HAP-1 (cell line): ENCODE measurements at regions of chr6 and their contacts with region 1.

Region 1: DNA sequence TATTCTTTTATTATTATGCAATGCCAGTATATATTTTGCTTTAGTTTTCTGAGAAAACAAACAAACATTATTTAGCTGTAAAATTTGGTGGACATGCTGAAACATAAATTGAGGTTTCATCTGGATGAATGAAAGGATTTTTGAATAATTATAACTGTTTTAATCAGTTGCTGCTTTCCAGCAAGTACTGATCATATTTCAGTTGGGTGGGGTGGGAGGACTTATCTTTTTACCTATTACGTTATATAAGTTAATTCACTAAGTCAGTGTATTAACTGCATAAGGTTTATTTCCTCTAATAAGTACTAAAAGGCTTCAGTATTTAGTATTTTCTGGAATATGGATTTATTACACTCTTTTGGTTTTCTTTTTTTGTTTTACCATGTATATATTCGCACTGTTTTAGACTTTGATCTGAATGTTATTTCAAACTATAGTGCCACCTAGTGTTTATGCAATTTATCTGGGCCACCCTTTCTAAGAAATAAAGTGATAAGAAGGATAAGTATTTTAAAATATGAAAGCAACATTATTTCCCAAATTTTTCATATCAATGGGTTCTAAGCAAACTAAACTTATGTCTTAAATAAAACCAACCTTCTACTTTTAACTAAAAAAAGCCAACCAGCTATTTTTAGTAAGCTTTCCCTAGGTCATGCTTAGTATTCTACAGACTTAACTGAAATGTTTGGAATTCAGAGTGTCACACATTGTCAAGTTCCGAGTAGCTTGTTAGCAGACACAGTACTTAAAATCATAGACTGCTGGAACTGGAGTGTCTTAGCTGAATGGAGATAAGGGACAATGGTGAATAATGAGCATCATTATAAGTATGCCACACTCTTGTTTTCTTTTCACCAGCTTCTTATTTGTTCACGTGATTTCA is 105.4 kb upstream of the MCHR2 start:
- DNase-seq: peak in 1 of 2 experiments; percentile 60
- H3K4me3 ChIP-seq: no peak overlapping the region
- H3K4me1 ChIP-seq: peaks cover 2% of the 10 kb centered on the region; the same call in 1 of the 2 replicates
- H3K27me3 ChIP-seq: no peaks in the 10 kb centered on the region

Region 2: GRCh38 chr6:99868074-99868702 is 231.2 kb before region 1 on chr6:
- in situ Hi-C with region 1: loop called (anchors 10 kb)
- DNase-seq: peak; percentile 69 to 90
- H3K4me3 ChIP-seq: no peak overlapping the region
- H3K4me1 ChIP-seq: no peaks in the 10 kb centered on the region
- H3K27me3 ChIP-seq: peaks cover 9% of the 10 kb centered on the region

Region 3: DNA sequence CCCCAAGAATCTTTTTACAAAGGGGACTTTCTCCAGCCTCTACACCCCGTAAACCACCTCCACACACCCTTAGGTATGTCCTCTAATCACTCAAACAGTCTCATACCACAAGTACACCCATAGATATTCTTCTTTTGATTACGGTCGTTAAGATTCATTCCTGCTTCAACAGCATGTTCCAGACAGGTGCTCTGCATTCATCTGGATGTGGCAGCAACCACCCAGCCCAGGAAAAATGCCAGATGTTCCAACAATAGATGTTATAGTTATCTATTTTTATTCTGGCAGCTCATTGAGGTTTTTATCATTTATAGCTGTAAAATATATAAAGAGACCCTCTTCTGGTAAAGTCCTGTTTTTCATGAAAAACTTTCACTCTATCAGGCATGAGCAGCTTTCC is 304.6 kb after region 1 on chr6:
- in situ Hi-C with region 1: no loop called
- DNase-seq: no peak
- H3K4me3 ChIP-seq: no peak overlapping the region
- H3K4me1 ChIP-seq: no peaks in the 10 kb centered on the region
- H3K27me3 ChIP-seq: no peaks in the 10 kb centered on the region

Region 4: DNA sequence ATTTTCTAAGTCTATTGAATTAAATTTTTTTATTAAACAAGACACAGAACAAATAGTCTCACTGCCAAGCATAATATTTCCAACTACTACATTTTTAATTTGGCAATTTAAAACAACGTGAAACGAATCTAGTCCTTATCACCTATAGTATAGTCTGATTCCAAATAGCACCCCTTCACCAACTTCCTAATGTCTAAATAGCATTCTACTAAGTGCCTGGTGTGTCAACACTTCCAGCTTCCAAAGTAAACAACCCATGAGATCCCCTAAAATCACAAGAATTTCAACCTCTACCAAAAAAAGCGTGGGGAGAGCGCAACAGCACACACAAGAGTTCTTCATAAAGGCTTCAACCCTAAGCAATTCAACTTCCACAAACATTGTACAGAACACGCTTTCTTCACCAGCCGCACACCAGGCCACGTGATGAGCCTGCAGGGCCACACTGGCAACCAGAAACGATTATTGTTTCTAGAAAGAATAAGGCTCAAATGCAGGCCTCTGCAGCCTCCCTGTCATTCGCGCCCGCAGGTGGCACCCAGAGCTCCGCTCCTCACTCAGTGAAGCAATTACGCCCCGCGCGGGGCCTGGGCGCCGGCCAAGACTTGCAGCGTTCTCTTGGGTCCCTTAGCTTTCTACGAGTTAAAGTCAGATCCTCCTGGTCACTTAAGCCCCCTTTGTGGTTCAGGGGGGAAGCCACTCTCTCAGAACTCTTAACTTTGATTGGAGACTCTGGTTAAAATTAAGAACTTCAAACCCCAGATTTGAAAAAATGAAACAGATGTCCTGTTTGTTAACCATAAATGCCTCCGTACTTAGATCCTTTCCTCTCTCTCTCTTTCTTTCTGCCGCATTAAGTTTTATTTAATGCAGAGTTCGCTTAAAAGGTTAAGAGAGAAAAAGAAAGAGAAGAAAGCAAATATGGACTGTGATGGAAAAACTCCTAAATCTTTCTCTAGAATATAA is 347.0 kb after region 1 on chr6:
- in situ Hi-C with region 1: no loop called
- DNase-seq: no peak
- H3K4me3 ChIP-seq: no peak overlapping the region
- H3K4me1 ChIP-seq: no peaks in the 10 kb centered on the region
- H3K27me3 ChIP-seq: no peaks in the 10 kb centered on the region